Activated CD4-positive, alpha-beta memory T cell treated with anti-CD3 and anti-CD28 coated beads for 36 hours (primary cell): ENCODE measurements at regions of chr12 and their contacts with region 1.

Region 1: GRCh38 chr12:103441437-103442181 is 54.2 kb downstream of the C12orf42 start:
- DNase-seq: peak; percentile 50
- H3K4me3 Mint-ChIP-seq: peak overlapping the region; percentile 51
- H3K27ac Mint-ChIP-seq: peak overlapping the region; percentile 83
- H3K4me1 Mint-ChIP-seq: peaks cover 21% of the 10 kb centered on the region
- H3K27me3 Mint-ChIP-seq: no peaks in the 10 kb centered on the region

Region 2: DNA sequence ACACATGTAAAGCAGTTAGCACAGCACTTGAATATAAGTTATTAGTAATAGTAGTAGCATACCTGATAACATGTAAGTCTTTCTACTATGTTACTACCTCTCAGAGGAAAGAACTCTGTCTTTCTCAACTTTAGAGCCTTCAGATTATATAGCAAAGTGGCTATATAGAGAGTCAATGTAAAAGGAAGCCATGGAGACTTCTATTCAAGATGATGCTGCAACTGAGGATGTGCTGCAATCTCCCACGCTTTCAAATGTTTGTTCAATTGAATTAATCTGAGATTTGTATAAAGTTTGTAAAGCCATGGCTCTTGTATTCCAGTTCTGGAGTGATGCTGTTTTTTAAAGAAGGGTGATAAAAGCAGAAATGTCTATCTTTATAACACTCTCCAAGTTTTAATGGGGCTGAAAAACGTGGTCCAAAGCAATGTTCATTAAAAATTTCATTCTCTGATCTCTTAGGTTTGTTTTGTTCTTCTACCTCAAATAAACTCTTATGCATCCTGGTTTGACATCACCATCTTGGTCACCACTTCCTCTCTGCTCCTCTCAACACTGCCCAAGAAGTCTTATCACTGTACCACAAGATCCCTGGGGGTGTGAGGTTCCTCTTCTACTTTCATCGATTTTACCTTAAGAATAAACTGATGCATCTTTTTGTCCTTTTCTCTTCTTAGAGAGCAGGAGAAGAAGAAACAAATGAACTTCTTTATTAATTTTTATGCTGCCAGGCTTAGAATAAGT is 13.6 kb after region 1 on chr12:
- CTCF ChIA-PET with region 1: no interaction called
- POLR2A ChIA-PET with region 1: no interaction called
- intact Hi-C with region 1: loop called (anchors 2 kb)
- DNase-seq: no peak
- H3K4me3 Mint-ChIP-seq: no peak overlapping the region
- H3K27ac Mint-ChIP-seq: no peak overlapping the region
- H3K4me1 Mint-ChIP-seq: peaks cover 22% of the 10 kb centered on the region
- H3K27me3 Mint-ChIP-seq: no peaks in the 10 kb centered on the region

Region 3: DNA sequence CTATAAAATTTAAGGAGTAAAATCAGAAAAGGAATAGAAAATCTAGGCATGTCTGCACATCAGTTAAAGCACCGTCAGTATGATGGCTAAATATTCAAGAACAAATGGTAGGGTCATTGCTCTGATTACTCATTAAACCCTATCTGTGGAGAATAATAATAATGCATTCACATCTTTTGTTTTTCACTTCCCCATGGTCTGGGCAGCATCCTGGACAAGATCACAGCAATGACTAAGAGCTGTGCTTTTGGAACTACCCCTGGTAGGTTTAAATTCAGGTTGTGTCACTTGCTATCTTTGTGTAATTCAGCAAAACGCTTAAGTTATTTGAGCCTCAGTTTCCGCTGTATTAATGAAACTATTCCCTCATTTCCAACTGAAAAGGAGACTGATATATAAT is 21.1 kb after region 1 on chr12:
- CTCF ChIA-PET with region 1: no interaction called
- POLR2A ChIA-PET with region 1: no interaction called
- intact Hi-C with region 1: loop called (anchors 2 kb)
- DNase-seq: no peak
- H3K4me3 Mint-ChIP-seq: no peak overlapping the region
- H3K27ac Mint-ChIP-seq: no peak overlapping the region
- H3K4me1 Mint-ChIP-seq: peaks cover 4% of the 10 kb centered on the region
- H3K27me3 Mint-ChIP-seq: no peaks in the 10 kb centered on the region